CD14-positive monocyte (primary cell): ENCODE measurements at regions of chr7 and their contacts with region 1.

Region 1: DNA sequence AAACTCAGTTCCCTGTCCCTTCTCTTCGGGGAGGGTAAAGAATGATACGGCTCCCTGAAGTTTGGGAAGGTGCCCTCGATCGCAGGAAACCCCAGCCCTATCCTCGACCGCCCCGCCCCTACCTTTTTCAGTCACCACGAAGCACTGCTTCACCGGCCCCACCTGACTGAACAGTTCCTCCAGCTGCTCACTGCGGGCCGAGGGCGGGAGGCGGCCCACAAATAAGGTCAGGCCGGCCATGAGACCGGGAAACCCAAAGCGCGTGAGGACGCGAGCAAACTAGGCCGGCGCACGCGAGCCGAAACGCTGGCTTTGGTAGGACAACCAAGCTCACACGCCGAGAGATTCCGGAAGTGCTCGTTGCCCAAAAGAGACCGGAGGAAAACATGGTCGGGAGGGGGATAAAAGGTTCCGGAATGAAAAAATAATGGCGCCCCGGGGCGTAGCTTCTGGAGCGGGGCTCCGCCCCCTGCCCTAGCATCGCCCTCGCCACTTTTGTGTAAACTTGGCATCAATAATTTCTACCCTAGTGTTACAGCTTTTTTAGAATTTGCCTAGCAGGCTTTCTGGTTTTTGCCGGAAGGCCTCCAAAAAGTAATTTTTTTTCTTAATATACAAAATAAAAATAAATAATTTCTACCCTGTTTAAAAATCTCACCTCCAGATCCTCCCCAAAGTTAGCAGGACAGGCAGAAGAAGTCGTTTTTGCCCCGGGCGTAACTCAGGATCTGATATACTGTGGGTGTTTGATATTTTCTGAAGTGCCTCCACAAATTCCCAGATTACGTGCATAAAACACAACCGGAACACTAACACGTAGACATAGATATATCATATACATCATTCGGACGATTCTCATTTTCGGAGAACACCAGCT is at the start of gene RBM28:
- DNase-seq: peak; percentile 89 to 93 (median 90)
- H3K4me3 ChIP-seq: peak within 1 kb of the TSS; percentile 75 to 96 (median 78)
- H3K4me3 Mint-ChIP-seq: peak within 1 kb of the TSS; percentile 93 to 97
- H3K27ac ChIP-seq: peak within 1 kb of the TSS; percentile 81 to 95
- H3K27ac Mint-ChIP-seq: peak within 1 kb of the TSS; percentile 88 to 96 (median 94)
- H3K4me1 ChIP-seq: peaks cover 18 to 21% of the 10 kb centered on the region in 2 donors
- H3K4me1 Mint-ChIP-seq: peaks cover 22% of the 10 kb centered on the region
- H3K27me3 ChIP-seq: no peaks in the 10 kb centered on the region
- H3K27me3 Mint-ChIP-seq: peaks cover 2 to 5% (median 2%) of the 10 kb centered on the region in 3 donors
- CTCF ChIP-seq: no peak
- polyA plus RNA-seq, gene RBM28: 4.0 to 14.4 (median 4.9) TPM

Region 2: GRCh38 chr7:127447326-127447945 is 896.4 kb before region 1 on chr7:
- intact Hi-C with region 1: no loop called
- DNase-seq: peak; percentile 39 to 59 (median 59)
- H3K4me3 ChIP-seq: no peak overlapping the region
- H3K4me3 Mint-ChIP-seq: no peak overlapping the region
- H3K27ac ChIP-seq: no peak overlapping the region
- H3K27ac Mint-ChIP-seq: no peak overlapping the region
- H3K4me1 ChIP-seq: no peaks in the 10 kb centered on the region
- H3K4me1 Mint-ChIP-seq: no peaks in the 10 kb centered on the region
- H3K27me3 ChIP-seq: peaks cover 0 to 5% of the 10 kb centered on the region in 2 donors
- H3K27me3 Mint-ChIP-seq: peaks cover 25 to 47% (median 34%) of the 10 kb centered on the region in 3 donors
- CTCF ChIP-seq: peak; percentile 79

Region 3: DNA sequence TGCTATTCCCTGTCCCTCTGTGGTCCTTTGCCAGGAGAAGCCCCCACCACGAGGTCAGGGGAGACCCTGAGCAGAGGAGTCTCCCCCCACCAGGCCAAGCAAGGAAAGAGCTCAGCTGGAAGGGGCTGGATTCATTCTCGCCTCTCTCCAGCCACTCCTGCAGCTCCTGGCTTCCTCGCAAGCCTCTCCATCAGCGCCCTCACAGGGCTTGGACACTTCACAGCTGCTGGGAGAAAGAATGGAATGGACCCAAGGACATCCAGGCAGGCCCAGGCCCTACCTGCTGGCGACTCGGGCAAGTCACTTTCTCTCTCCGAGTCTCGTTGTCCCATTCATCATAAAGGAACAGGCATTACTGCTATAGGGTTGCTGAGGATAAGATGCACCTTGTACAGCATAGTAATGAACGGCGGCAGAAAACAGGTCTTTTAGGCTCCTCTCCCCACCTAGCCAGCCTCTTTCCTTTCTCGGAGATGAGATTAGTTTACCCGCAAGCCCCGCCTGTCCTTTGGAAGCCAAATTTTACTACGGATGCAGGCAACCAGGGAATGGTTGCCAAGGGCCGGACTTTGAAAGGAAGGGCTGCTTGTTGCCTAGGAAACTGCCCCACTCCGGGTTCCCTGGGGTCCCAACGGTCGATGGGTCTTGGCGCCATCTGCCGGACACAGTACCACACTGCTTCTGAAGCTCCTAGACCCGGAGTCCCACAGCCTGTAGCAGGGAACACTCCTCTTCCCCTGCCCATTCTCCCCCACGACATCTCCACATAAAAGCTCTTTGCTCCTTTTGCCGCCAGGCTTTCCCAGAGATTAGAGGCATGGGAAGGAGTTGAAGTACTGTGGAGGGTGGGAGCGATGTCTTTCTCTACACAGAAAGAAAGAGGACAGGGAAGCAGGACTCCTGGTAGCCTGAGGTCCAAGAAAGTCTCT is 43.7 kb after region 1 on chr7:
- intact Hi-C with region 1: loop called (anchors 2 kb)
- DNase-seq: peak; percentile 51 to 65 (median 62)
- H3K4me3 ChIP-seq: no peak overlapping the region
- H3K4me3 Mint-ChIP-seq: peak overlapping the region in 1 of 2 donors; percentile 63
- H3K27ac ChIP-seq: no peak overlapping the region
- H3K27ac Mint-ChIP-seq: no peak overlapping the region
- H3K4me1 ChIP-seq: peaks cover 11 to 12% of the 10 kb centered on the region in 2 donors
- H3K4me1 Mint-ChIP-seq: peaks cover 23% of the 10 kb centered on the region
- H3K27me3 ChIP-seq: no peaks in the 10 kb centered on the region
- H3K27me3 Mint-ChIP-seq: peaks cover 7 to 15% (median 11%) of the 10 kb centered on the region in 3 donors
- CTCF ChIP-seq: peak; percentile 95

Region 4: GRCh38 chr7:128425850-128426249 is 82.1 kb after region 1 on chr7:
- intact Hi-C with region 1: loop called in 1 of 2 experiments (anchors 5 kb)
- DNase-seq: peak; percentile 63 to 75 (median 73)
- H3K4me3 ChIP-seq: no peak overlapping the region
- H3K4me3 Mint-ChIP-seq: no peak overlapping the region
- H3K27ac ChIP-seq: no peak overlapping the region
- H3K27ac Mint-ChIP-seq: no peak overlapping the region
- H3K4me1 ChIP-seq: peaks cover 34 to 47% of the 10 kb centered on the region in 2 donors
- H3K4me1 Mint-ChIP-seq: peaks cover 24% of the 10 kb centered on the region
- H3K27me3 ChIP-seq: no peaks in the 10 kb centered on the region
- H3K27me3 Mint-ChIP-seq: no peaks in the 10 kb centered on the region
- CTCF ChIP-seq: peak; percentile 97

Region 5: DNA sequence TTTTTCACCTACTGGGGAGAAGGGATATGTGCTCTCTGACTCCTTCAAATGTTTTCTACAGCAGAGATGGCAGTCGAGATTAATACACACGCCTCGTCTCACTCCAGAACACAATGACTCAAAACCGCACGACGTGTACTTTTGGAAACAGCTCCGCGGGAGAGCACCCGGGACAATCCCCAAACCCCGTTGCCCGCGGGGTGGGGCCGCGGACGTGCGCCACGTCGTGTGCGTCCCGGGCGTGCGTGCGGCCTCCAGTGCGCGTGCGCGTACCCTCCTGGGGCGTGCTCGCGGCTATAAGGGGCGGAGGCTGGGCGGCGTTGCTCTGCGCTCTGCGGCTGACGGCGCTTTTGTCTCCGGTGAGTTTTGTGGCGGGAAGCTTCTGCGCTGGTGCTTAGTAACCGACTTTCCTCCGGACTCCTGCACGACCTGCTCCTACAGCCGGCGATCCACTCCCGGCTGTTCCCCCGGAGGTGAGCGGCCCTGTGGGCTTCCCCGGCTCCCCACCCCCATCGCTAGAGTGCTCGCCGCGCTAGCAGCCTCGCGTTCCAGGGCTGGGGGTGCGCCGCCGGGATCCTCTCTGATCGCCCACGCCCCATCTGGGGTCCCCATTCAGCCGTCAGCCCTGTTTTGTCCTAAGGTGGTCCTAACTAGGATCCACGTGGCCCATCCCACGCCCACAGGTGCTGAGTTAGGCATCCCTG is 111.9 kb after region 1 on chr7 and contains the start of gene HILPDA:
- intact Hi-C with region 1: loop called (anchors 5 to 10 kb)
- DNase-seq: peak; percentile 90 to 98 (median 94)
- H3K4me3 ChIP-seq: peak within 1 kb of the TSS; percentile 69 to 91 (median 85)
- H3K4me3 Mint-ChIP-seq: peak within 1 kb of the TSS; percentile 89 to 95
- H3K27ac ChIP-seq: peak within 1 kb of the TSS; percentile 86 to 95
- H3K27ac Mint-ChIP-seq: peak within 1 kb of the TSS; percentile 95 to 99 (median 98)
- H3K4me1 ChIP-seq: peaks cover 20 to 32% of the 10 kb centered on the region in 2 donors
- H3K4me1 Mint-ChIP-seq: peaks cover 34% of the 10 kb centered on the region
- H3K27me3 ChIP-seq: no peaks in the 10 kb centered on the region
- H3K27me3 Mint-ChIP-seq: peaks cover 0 to 1% (median 0%) of the 10 kb centered on the region in 3 donors
- CTCF ChIP-seq: no peak
- polyA plus RNA-seq, gene HILPDA: 2.0 to 7.9 (median 2.6) TPM

Region 6: DNA sequence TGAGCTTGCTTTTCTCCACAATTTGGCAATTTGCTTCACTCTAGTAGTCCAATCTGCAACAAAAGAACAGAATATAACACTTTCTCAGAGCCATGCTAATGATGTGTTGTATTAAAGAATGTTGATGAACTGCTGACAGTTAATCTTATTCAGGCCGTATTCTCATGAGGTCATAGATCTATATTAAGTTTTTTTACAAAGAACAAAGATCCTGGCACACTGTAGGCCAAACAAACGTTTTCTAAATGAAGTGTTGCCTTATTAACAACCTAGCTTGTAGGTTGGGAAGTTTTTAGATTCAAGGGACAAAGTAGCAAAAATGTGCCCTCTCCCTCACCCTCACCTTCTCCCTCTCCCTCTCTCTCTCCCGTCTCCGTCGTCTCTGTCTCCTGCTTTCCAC is 118.7 kb after region 1 on chr7:
- intact Hi-C with region 1: loop called (anchors 5 to 10 kb)
- DNase-seq: no peak
- H3K4me3 ChIP-seq: no peak overlapping the region
- H3K4me3 Mint-ChIP-seq: no peak overlapping the region
- H3K27ac ChIP-seq: no peak overlapping the region
- H3K27ac Mint-ChIP-seq: no peak overlapping the region
- H3K4me1 ChIP-seq: peaks cover 3 to 9% of the 10 kb centered on the region in 2 donors
- H3K4me1 Mint-ChIP-seq: peaks cover 10% of the 10 kb centered on the region
- H3K27me3 ChIP-seq: no peaks in the 10 kb centered on the region
- H3K27me3 Mint-ChIP-seq: no peaks in the 10 kb centered on the region
- CTCF ChIP-seq: no peak